GM10248 (cell line): ENCODE measurements at regions of chr1 and their contacts with region 1.

Region 1: GRCh38 chr1:156445789-156446263 is 54.7 kb downstream of the MEF2D start:
- DNase-seq: peak; percentile 72
- CTCF ChIP-seq: peak; percentile 98

Region 2: DNA sequence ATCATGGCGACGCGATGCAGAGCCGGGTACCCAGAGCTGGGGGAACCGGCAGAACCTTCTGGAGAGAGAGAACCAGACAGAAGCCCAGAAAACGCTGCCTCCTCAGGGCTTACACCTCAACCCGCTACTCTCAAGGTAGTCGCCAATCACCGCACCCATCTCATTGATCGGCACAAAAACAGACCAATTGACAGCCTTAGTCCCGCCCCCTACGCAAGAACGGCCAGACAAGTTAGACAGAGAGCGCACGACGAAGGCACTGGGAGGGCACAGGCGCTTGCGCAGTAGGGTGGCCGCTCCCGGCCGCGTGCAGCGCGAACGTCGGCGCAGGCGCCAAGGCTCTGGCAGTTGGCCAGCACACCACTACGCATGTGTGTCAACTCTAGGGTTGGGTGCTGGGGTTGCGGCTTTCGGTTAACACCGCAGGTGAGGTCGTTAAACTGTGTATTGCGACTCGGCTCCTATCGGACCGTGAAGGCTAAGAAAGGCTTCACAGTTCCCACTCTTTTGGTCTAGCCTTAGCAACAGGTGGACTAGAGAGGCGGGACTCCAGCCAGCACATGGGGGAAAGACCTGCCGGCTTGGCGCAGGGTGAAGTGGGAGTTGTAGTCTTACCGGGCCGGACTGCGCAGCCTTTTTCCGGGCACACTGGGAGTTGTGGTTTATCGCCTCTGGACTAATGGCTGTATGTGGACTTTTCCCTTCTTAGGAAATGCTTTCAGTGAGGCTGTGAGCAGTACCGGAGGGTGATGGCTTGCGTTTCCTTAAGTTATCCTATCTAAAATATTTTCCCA is 107.4 kb before region 1 on chr1 and contains the starts of genes CCT3 and TSACC:
- CTCF ChIA-PET with region 1: interaction called, 13 read pairs
- POLR2A ChIA-PET with region 1: no interaction called
- DNase-seq: peak; percentile 98
- CTCF ChIP-seq: no peak

Region 3: GRCh38 chr1:156388174-156389137 is 57.4 kb before region 1 on chr1:
- CTCF ChIA-PET with region 1: interaction called, 480 read pairs
- POLR2A ChIA-PET with region 1: no interaction called
- DNase-seq: no peak
- CTCF ChIP-seq: no peak

Region 4: DNA sequence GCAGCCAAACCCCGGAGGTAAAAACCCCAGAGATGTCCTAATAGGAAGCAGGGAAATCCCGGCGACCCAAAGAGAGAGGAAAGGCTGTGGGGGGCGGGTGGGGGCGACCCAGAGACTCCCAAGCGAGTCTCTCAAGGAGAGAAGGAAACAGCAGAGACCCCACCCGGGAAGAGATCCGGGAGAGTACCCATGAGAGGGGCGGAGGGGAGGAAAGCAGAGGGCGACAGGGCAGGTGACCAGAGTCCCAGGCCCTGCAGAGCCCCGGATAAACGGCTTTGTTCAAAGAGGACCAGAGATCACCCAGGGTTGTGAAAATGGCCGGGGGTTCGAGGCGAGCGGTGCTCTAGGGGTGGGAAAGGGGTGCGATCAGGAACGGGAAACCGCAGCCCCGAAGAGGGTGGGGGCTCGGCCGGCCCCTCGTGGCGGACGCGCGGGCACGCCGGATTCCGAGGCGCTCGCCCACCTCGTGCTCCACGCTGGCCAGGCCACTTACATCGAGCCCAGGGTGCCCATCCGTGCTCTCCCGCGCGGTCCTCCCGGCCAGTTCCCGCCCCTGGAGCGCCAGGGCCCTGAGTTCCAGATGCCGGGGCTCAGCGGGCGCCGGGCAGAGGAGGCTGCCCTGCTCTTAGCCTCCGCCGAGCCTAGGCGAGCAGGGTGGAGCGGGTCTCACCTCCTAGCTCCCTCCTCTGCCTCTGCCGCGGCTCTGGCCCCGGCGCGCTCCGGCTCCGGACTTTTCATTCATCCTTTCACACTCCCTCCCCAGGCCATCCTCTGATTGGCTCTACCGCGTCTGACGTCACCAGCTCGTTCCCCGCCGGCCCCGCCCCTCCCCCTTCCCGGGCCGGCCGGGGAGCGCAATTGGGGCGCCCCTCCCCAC is 24.5 kb before region 1 on chr1:
- CTCF ChIA-PET with region 1: interaction called, 24 read pairs
- POLR2A ChIA-PET with region 1: interaction called, 3 read pairs
- DNase-seq: peak; percentile 95
- CTCF ChIP-seq: no peak

Region 5: DNA sequence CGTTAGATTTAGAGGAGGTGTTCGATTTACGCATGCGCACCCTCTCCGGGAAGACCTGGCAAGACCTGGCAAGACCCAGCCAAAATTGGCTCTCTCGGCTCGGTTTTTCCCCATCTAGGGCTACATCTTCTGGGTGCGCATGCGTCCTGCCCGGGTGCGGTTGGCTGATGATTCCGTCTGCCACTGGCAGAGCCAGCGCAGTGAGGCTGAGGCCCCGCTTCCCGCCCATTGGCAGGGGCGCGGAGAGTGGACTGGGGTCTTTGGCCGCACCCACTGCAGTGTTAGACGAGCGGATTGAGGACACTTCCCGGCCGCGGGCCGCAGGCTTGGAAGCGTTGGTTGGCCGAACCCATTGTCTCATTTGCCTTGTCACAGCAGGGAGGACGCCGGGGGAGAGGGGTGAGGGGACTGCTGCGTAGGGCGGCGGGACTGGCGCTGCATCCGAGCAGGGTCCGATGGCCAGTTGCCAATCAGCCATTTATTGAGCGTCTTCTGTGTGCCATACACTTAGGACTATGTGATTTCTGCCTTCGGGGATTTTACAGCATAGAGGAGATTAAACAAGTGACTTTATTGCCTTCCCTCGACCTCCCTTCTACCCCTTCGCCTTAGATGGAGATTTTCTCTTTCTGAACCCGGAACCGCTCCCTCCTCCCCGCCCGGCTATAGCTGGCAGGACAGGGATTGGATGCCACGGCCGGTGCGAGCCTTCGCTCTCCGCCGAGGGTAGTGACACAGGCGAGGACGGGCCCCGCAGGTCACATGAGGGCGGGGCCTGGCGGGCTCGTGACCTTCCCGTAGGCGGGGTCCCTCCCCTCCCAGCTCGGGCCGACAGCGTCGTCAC is 11.0 kb after region 1 on chr1:
- CTCF ChIA-PET with region 1: interaction called, 24 read pairs
- POLR2A ChIA-PET with region 1: no interaction called
- DNase-seq: peak; percentile 98
- CTCF ChIP-seq: no peak